Activated CD4-positive, alpha-beta T cell treated with anti-CD3 and anti-CD28 coated beads for 36 hours (primary cell): ENCODE measurements at regions of chr5 and their contacts with region 1.

Region 1: GRCh38 chr5:141557681-141558136 is 61.1 kb downstream of the DIAPH1 start:
- DNase-seq: peak; percentile 88
- ATAC-seq: peak; percentile 90
- H3K4me3 Mint-ChIP-seq: no peak overlapping the region
- H3K27ac Mint-ChIP-seq: peak overlapping the region; percentile 3
- H3K4me1 Mint-ChIP-seq: peaks cover 28% of the 10 kb centered on the region
- H3K27me3 Mint-ChIP-seq: no peaks in the 10 kb centered on the region

Region 2: GRCh38 chr5:141412854-141413539 is 144.7 kb before region 1 on chr5 and contains the start of gene PCDHGA10:
- CTCF ChIA-PET with region 1: interaction called, 46 read pairs
- POLR2A ChIA-PET with region 1: no interaction called
- intact Hi-C with region 1: loop called in 1 of 2 experiments (anchors 1 kb)
- DNase-seq: peak; percentile 74
- ATAC-seq: peak; percentile 76
- H3K4me3 Mint-ChIP-seq: peak within 1 kb of the TSS; percentile 62
- H3K27ac Mint-ChIP-seq: no peak within 1 kb of the TSS
- H3K4me1 Mint-ChIP-seq: peaks cover 10% of the 10 kb centered on the region
- H3K27me3 Mint-ChIP-seq: peaks cover 63% of the 10 kb centered on the region
- total RNA-seq, gene PCDHGA10: 0.07 TPM in 1 of 2 experiments, not detected in the other

Region 3: DNA sequence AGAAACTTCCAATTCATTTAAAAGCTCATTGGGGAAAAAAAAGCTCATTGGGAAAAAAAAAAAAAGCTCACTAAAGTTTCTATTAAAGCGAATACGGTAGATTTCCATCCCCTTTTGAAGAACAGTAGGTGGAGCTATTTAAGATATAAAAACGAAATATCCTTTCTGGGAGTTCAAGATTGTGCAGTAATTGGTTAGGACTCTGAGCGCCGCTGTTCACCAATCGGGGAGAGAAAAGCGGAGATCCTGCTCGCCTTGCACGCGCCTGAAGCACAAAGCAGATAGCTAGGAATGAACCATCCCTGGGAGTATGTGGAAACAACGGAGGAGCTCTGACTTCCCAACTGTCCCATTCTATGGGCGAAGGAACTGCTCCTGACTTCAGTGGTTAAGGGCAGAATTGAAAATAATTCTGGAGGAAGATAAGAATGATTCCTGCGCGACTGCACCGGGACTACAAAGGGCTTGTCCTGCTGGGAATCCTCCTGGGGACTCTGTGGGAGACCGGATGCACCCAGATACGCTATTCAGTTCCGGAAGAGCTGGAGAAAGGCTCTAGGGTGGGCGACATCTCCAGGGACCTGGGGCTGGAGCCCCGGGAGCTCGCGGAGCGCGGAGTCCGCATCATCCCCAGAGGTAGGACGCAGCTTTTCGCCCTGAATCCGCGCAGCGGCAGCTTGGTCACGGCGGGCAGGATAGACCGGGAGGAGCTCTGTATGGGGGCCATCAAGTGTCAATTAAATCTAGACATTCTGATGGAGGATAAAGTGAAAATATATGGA is 127.2 kb before region 1 on chr5 and contains the start of gene PCDHGA12:
- CTCF ChIA-PET with region 1: interaction called, 11 read pairs
- POLR2A ChIA-PET with region 1: no interaction called
- intact Hi-C with region 1: no loop called
- DNase-seq: peak; percentile 68
- ATAC-seq: peak; percentile 73
- H3K4me3 Mint-ChIP-seq: peak within 1 kb of the TSS; percentile 45
- H3K27ac Mint-ChIP-seq: no peak within 1 kb of the TSS
- H3K4me1 Mint-ChIP-seq: peaks cover 17% of the 10 kb centered on the region
- H3K27me3 Mint-ChIP-seq: peaks cover 69% of the 10 kb centered on the region
- total RNA-seq, gene PCDHGA12: 0.07 to 0.09 TPM

Region 4: GRCh38 chr5:141532726-141533125 is 25.0 kb before region 1 on chr5:
- CTCF ChIA-PET with region 1: interaction called, 12 read pairs
- POLR2A ChIA-PET with region 1: no interaction called
- intact Hi-C with region 1: no loop called
- DNase-seq: no peak
- ATAC-seq: no peak
- H3K4me3 Mint-ChIP-seq: no peak overlapping the region
- H3K27ac Mint-ChIP-seq: no peak overlapping the region
- H3K4me1 Mint-ChIP-seq: no peaks in the 10 kb centered on the region
- H3K27me3 Mint-ChIP-seq: no peaks in the 10 kb centered on the region

Region 5: DNA sequence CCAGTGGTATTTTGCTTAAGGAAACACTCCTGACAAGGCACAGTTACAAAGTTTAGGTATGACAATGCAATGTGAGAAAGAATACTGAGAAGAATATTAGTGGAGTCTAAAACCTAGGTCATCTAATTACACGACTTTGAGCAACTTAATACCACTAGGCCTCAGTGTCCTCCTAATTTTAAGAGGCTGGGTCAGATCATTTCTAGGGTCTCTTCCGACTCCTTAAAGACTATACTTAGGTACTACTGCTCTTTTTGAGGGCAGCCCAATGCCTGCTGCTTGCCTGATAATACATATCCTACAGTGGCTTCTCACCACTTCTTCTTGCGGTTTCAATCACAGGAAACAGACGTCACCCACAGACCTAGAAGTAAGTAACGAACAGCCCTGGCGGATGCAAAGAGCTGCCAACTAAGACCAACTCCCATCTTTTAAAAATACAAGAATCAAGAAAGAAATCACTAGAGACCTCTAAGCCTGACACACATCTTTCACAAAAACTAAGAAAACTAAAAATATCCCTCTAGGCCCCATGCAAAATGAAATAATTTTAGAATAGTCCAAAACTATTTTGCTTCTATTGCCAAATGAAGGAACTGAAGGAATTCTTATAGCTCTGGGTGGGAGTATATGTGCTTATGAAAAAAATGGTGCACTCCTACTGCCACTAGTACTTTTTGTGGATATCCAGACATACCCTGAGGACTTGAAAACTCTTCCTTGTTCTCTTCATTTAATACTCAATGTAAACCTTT is 48.0 kb after region 1 on chr5:
- CTCF ChIA-PET with region 1: no interaction called
- POLR2A ChIA-PET with region 1: interaction called, 11 read pairs
- intact Hi-C with region 1: no loop called
- DNase-seq: peak; percentile 79
- ATAC-seq: peak; percentile 90
- H3K4me3 Mint-ChIP-seq: peak overlapping the region; percentile 55
- H3K27ac Mint-ChIP-seq: peak overlapping the region; percentile 91
- H3K4me1 Mint-ChIP-seq: peaks cover 86% of the 10 kb centered on the region
- H3K27me3 Mint-ChIP-seq: no peaks in the 10 kb centered on the region

Region 6: GRCh38 chr5:141747152-141748141 is 189.7 kb after region 1 on chr5:
- CTCF ChIA-PET with region 1: no interaction called
- POLR2A ChIA-PET with region 1: no interaction called
- intact Hi-C with region 1: no loop called
- DNase-seq: no peak
- ATAC-seq: no peak
- H3K4me3 Mint-ChIP-seq: no peak overlapping the region
- H3K27ac Mint-ChIP-seq: no peak overlapping the region
- H3K4me1 Mint-ChIP-seq: no peaks in the 10 kb centered on the region
- H3K27me3 Mint-ChIP-seq: peaks cover 35% of the 10 kb centered on the region